Activated B cell treated with CpG ODN at 0.5 μM for 24 hours (primary cell): ENCODE measurements at regions of chr11 and their contacts with region 1.

Region 1: DNA sequence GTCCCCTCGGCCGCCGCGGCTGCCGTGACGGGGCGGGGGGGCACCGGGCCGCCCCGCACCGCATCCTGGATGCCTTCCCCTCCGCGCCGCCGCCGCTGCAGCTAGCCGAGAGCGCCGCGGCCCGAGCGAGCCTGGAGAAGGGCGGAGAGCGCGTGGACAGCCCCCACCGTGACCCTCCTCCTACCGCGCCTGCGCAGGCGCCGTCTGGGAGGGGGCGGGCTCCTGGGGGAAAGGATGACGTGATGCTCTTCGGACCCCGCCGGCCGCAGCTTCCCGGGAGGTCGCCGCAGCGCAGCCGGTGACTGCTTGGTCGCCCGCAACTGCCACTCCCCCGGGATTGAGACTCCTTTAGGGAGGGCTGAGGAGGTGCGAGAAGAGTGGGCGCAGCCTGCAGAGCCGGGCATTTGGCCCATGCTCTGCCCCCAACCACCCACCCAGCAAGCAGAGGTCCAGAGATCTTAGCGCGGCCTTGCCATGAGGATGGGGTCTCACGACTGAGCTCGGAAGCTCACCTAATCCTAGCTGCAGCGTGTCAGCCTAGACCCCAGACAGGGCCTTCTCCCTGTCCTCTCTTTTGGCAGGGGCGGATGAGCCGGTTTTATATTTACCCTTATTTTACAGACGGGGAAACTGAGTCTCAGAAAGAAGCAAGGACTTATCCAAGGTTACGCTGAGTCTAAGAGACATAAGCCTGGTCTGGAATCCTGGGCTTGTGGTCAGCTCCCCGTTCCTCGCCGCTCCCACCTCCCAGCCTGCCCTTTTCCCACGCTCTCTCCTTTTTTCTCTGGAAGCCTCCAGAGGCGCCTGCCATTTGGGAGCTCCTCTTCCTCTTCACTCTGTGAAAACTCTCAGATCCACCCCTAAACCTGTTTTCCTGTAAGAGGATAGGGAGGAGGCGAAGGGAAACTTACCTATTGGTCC is at the start of gene DENND5A:
- DNase-seq: peak; percentile 54
- ATAC-seq: peak; percentile 61
- H3K4me3 Mint-ChIP-seq: peak within 1 kb of the TSS; percentile 94
- H3K27ac Mint-ChIP-seq: peak within 1 kb of the TSS; percentile 93
- H3K4me1 Mint-ChIP-seq: peaks cover 37% of the 10 kb centered on the region
- H3K27me3 Mint-ChIP-seq: no peaks in the 10 kb centered on the region
- CTCF ChIP-seq: no peak
- total RNA-seq, gene DENND5A: 23.2 and 24.4 TPM in 2 replicates

Region 2: GRCh38 chr11:9170450-9170849 is 95.0 kb before region 1 on chr11:
- CTCF ChIA-PET with region 1: no interaction called
- POLR2A ChIA-PET with region 1: no interaction called
- intact Hi-C with region 1: loop called (anchors 5 kb)
- DNase-seq: no peak
- ATAC-seq: no peak
- H3K4me3 Mint-ChIP-seq: no peak overlapping the region
- H3K27ac Mint-ChIP-seq: no peak overlapping the region
- H3K4me1 Mint-ChIP-seq: no peaks in the 10 kb centered on the region
- H3K27me3 Mint-ChIP-seq: no peaks in the 10 kb centered on the region
- CTCF ChIP-seq: no peak

Region 3: DNA sequence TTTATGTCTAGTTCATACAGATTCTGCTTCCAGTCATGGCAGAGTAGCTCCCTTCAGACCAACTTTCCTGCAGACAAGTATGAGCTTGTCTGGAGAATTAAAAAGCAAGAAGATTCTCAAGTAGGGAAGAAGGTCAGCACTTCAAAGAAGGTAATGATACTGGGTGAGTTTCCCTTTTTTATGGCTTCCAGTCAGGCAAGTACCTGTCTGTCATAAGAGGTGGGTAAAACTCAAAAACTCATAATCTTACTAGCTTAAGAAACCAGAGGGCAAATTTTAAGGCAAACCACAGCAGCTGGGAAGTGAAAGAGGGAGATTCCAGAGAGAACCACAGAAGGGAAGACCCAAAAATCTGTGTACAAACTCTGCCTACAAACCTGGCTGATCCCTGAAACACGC is 54.5 kb before region 1 on chr11:
- CTCF ChIA-PET with region 1: no interaction called
- POLR2A ChIA-PET with region 1: interaction called, 3 read pairs
- intact Hi-C with region 1: loop called (anchors 5 kb)
- DNase-seq: no peak
- ATAC-seq: no peak
- H3K4me3 Mint-ChIP-seq: no peak overlapping the region
- H3K27ac Mint-ChIP-seq: peak overlapping the region; percentile 18
- H3K4me1 Mint-ChIP-seq: peaks cover 51% of the 10 kb centered on the region
- H3K27me3 Mint-ChIP-seq: no peaks in the 10 kb centered on the region
- CTCF ChIP-seq: no peak

Region 4: GRCh38 chr11:9250139-9250582 is 15.3 kb before region 1 on chr11:
- CTCF ChIA-PET with region 1: no interaction called
- POLR2A ChIA-PET with region 1: interaction called, 14 read pairs
- intact Hi-C with region 1: loop called (anchors 1 kb)
- DNase-seq: no peak
- ATAC-seq: no peak
- H3K4me3 Mint-ChIP-seq: peak overlapping the region; percentile 1
- H3K27ac Mint-ChIP-seq: no peak overlapping the region
- H3K4me1 Mint-ChIP-seq: peaks cover 41% of the 10 kb centered on the region
- H3K27me3 Mint-ChIP-seq: no peaks in the 10 kb centered on the region
- CTCF ChIP-seq: no peak

Region 5: DNA sequence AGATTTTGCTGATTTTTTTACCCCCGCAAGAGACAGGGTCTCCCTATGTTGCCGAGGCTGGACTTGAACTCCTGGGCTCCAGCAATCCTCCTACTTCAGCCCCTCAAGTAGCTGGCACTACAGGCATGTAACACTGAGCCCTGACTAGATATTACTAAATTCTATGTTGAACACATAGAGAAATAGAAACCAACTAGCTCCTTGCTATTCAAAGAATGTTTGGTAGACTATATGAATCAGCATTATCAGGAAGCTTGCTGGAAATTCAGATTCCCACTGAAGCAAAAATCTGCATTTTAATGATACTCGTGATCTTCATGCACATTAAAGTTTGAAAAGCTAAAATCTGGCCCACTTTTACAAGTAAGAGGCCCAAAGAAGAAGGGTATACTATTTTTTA is 37.0 kb after region 1 on chr11:
- CTCF ChIA-PET with region 1: no interaction called
- POLR2A ChIA-PET with region 1: no interaction called
- intact Hi-C with region 1: no loop called
- DNase-seq: no peak
- ATAC-seq: no peak
- H3K4me3 Mint-ChIP-seq: no peak overlapping the region
- H3K27ac Mint-ChIP-seq: no peak overlapping the region
- H3K4me1 Mint-ChIP-seq: peaks cover 3% of the 10 kb centered on the region
- H3K27me3 Mint-ChIP-seq: no peaks in the 10 kb centered on the region
- CTCF ChIP-seq: no peak

Region 6: GRCh38 chr11:9314291-9315036 is 49.0 kb after region 1 on chr11 and contains the start of gene TMEM41B:
- CTCF ChIA-PET with region 1: no interaction called
- POLR2A ChIA-PET with region 1: interaction called, 11 read pairs
- intact Hi-C with region 1: loop called (anchors 1 kb)
- DNase-seq: peak; percentile 100
- ATAC-seq: peak; percentile 96
- H3K4me3 Mint-ChIP-seq: peak within 1 kb of the TSS; percentile 98
- H3K27ac Mint-ChIP-seq: peak within 1 kb of the TSS; percentile 95
- H3K4me1 Mint-ChIP-seq: peaks cover 49% of the 10 kb centered on the region
- H3K27me3 Mint-ChIP-seq: peaks cover 4% of the 10 kb centered on the region
- CTCF ChIP-seq: no peak
- total RNA-seq, gene TMEM41B: 19.4 and 21.7 TPM in 2 replicates

Region 7: GRCh38 chr11:9363954-9364912 is 98.8 kb after region 1 on chr11:
- CTCF ChIA-PET with region 1: no interaction called
- POLR2A ChIA-PET with region 1: interaction called, 4 read pairs
- intact Hi-C with region 1: loop called (anchors 1 kb)
- DNase-seq: peak; percentile 74
- ATAC-seq: peak; percentile 97
- H3K4me3 Mint-ChIP-seq: peak overlapping the region; percentile 86
- H3K27ac Mint-ChIP-seq: peak overlapping the region; percentile 89
- H3K4me1 Mint-ChIP-seq: peaks cover 8% of the 10 kb centered on the region
- H3K27me3 Mint-ChIP-seq: no peaks in the 10 kb centered on the region
- CTCF ChIP-seq: no peak